ENCODE measurements at regions of chr7 and their contacts with region 1.

Region 1: GRCh38 chr7:149497456-149498261 is at the start of gene ZNF746:
- DNase-seq: peak; percentile 79 to 91
- ATAC-seq: peak; percentile 92 to 96 (median 93)
- H3K4me3 ChIP-seq: peak within 1 kb of the TSS; percentile 46
- H3K4me3 Mint-ChIP-seq: peak within 1 kb of the TSS; percentile 95
- H3K27ac ChIP-seq: peak within 1 kb of the TSS; percentile 24
- H3K27ac Mint-ChIP-seq: peak within 1 kb of the TSS; percentile 85 to 94
- H3K4me1 ChIP-seq: peaks cover 25% of the 10 kb centered on the region
- H3K4me1 Mint-ChIP-seq: peaks cover 36% of the 10 kb centered on the region in 2 donors
- H3K27me3 ChIP-seq: no peaks in the 10 kb centered on the region
- H3K27me3 Mint-ChIP-seq: peaks cover 0 to 2% of the 10 kb centered on the region in 2 donors
- CTCF ChIP-seq: peak; percentile 17
- total RNA-seq, gene ZNF746: 41.4 to 48.6 (median 47.3) TPM

Region 2: GRCh38 chr7:149239345-149240191 is 258.1 kb before region 1 on chr7 and contains the start of gene ZNF212:
- intact Hi-C with region 1: loop called (anchors 2 kb)
- DNase-seq: peak; percentile 82 to 92
- ATAC-seq: peak; percentile 99 to 100 (median 100)
- H3K4me3 ChIP-seq: peak within 1 kb of the TSS; percentile 91
- H3K4me3 Mint-ChIP-seq: peak within 1 kb of the TSS; percentile 93
- H3K27ac ChIP-seq: peak within 1 kb of the TSS; percentile 53
- H3K27ac Mint-ChIP-seq: peak within 1 kb of the TSS; percentile 79 to 91
- H3K4me1 ChIP-seq: peaks cover 18% of the 10 kb centered on the region
- H3K4me1 Mint-ChIP-seq: peaks cover 21 to 24% of the 10 kb centered on the region in 2 donors
- H3K27me3 ChIP-seq: peaks cover 2% of the 10 kb centered on the region
- H3K27me3 Mint-ChIP-seq: peaks cover 0 to 4% of the 10 kb centered on the region in 2 donors
- CTCF ChIP-seq: peak; percentile 77
- total RNA-seq, gene ZNF212: 11.2 to 23.7 (median 17.0) TPM

Region 3: DNA sequence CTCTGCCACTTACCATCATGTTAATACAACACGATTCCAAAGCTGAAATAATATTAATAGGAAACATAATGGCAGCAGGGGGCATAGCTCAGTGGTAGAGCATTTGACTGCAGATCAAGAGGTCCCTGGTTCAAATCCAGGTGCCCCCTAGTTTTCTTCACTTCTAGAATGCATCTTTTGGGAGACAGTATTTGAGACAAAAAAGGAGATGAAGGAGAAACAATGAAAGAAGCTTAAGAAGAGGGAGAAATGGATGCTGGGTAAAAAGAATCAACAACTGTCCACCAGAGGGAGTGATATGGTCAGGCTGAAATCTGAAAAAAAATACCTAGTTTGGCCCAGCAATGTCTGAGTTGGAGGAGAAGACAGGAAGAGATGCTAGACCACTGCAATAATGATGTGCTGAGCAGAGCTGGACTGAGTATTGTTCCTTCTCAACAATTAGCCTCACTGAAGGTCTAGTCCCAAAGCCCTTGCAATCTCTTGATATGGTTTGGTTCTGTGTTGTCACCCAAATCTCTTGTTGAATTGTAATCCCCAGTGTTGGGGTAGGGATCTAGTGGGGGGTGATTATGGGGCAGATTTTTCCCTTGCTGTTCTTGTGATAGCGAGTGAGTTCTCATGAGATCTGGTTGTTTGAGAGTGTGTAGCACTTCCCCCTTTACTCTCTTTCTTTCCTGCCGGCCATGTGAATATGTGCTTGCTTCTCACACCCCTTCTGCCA is 187.4 kb before region 1 on chr7:
- intact Hi-C with region 1: loop called (anchors 2 kb)
- DNase-seq: peak in 1 of 2 donors; percentile 54
- ATAC-seq: peak; percentile 40 to 69 (median 47)
- H3K4me3 ChIP-seq: no peak overlapping the region
- H3K4me3 Mint-ChIP-seq: no peak overlapping the region
- H3K27ac ChIP-seq: no peak overlapping the region
- H3K27ac Mint-ChIP-seq: no peak overlapping the region
- H3K4me1 ChIP-seq: no peaks in the 10 kb centered on the region
- H3K4me1 Mint-ChIP-seq: peaks cover 0 to 6% of the 10 kb centered on the region in 2 donors
- H3K27me3 ChIP-seq: no peaks in the 10 kb centered on the region
- H3K27me3 Mint-ChIP-seq: peaks cover 4 to 23% of the 10 kb centered on the region in 2 donors
- CTCF ChIP-seq: peak; percentile 25

Region 4: GRCh38 chr7:149422129-149422913 is 75.3 kb before region 1 on chr7:
- intact Hi-C with region 1: loop called (anchors 2 kb)
- DNase-seq: peak; percentile 72 to 92
- ATAC-seq: peak; percentile 98 to 99 (median 98)
- H3K4me3 ChIP-seq: peak overlapping the region; percentile 58
- H3K4me3 Mint-ChIP-seq: peak overlapping the region; percentile 80
- H3K27ac ChIP-seq: peak overlapping the region; percentile 70
- H3K27ac Mint-ChIP-seq: peak overlapping the region; percentile 69 to 75
- H3K4me1 ChIP-seq: peaks cover 15% of the 10 kb centered on the region
- H3K4me1 Mint-ChIP-seq: peaks cover 0 to 12% of the 10 kb centered on the region in 2 donors
- H3K27me3 ChIP-seq: no peaks in the 10 kb centered on the region
- H3K27me3 Mint-ChIP-seq: no peaks in the 10 kb centered on the region
- CTCF ChIP-seq: peak; percentile 53

Region 5: DNA sequence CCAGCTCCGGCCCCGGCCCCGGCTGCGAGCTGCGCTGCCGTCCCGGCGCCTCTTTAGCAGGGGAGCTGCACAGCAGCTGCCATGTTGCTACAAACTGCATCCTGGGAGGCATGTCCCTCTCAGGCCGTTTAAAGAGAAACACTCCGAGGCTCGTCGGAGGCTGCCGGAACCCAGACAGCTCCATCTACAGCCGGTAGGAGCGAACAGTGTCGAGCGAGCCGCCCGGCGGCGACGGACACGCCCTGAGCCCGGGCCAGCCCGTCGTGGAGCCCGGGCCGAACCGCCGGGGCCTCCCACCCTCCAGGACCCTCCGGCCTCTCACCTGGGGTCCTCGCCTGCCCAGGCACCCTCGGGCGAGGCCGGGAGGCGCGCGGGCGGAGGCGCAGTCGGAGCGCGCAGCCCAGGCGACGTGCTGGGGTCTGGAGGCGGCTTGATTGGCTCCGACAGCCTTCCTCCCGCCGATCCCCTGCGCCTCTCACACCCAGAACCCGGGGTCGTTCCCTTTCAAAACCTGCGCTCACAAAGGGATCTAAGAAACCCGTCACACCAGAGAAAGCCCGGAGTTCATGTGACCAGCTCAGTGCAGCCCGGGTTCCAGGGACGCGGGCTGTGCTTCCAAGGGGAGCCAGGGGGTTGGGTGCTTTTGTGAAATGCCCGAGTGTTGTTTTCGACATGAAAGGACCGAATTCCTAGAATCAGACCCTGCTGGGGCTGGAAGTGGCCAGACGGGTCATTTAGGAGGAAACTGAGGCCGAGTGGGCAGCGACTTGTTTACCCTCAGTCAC is 37.0 kb before region 1 on chr7 and contains the start of gene ZNF777:
- intact Hi-C with region 1: loop called (anchors 1 kb)
- DNase-seq: peak; percentile 72 to 90
- ATAC-seq: peak; percentile 97 to 98 (median 97)
- H3K4me3 ChIP-seq: peak within 1 kb of the TSS; percentile 55
- H3K4me3 Mint-ChIP-seq: peak within 1 kb of the TSS; percentile 84
- H3K27ac ChIP-seq: peak within 1 kb of the TSS; percentile 47
- H3K27ac Mint-ChIP-seq: peak within 1 kb of the TSS in 1 of 2 donors; percentile 44
- H3K4me1 ChIP-seq: peaks cover 15% of the 10 kb centered on the region
- H3K4me1 Mint-ChIP-seq: peaks cover 30 to 37% of the 10 kb centered on the region in 2 donors
- H3K27me3 ChIP-seq: peaks cover 4% of the 10 kb centered on the region
- H3K27me3 Mint-ChIP-seq: peaks cover 14 to 25% of the 10 kb centered on the region in 2 donors
- CTCF ChIP-seq: peak; percentile 56
- total RNA-seq, gene ZNF777: 14.6 to 18.2 (median 17.2) TPM

Region 6: DNA sequence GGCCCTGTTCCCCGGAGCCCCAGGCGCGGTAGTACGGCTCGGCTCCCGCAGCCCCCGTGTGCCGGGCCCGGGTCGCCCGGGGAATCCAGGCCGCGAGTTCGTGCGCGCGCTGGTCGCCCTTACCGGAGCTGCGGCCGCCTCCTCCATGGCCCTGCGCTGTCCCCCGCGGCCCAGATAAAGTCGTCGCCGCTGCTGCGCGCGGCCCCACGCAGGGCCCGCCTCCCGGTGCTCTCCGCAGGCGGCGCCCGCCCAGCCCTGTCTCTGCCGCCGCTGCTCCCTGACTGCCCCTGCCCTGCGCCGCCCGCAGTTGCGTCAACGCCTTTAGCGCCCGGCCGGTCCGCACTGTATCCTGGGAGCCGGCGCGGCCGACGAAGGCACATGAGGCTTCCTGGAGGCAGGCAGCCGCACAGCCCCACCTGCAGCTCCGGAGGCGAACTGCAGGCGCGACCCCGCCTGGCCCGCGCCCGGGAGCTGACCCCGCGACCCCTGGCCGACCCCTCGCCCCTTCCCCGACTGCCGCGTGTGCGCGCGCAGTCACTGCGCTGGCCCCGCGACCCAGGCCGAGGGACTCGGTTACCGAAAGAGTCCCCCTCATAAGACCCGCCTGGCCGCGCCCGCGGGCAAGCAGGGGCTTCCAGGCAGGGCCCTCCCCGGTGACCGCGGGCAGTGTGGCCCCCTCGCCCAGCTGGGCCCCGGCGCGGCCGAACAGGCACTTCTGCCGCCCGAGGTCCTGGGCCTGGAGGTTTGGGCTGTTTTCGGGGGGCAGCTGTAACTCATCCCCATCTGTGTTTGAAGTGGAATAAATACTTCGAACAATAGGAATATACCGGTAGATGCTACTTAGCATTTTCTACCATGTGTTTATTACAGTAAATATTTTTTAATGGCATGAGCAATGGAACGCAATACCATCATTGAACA is 127.0 kb after region 1 on chr7:
- intact Hi-C with region 1: loop called (anchors 2 kb)
- DNase-seq: peak; percentile 92 to 94
- ATAC-seq: peak; percentile 82 to 95 (median 90)
- H3K4me3 ChIP-seq: peak overlapping the region; percentile 68
- H3K4me3 Mint-ChIP-seq: peak overlapping the region; percentile 86
- H3K27ac ChIP-seq: peak overlapping the region; percentile 75
- H3K27ac Mint-ChIP-seq: peak overlapping the region; percentile 88 to 95
- H3K4me1 ChIP-seq: peaks cover 38% of the 10 kb centered on the region
- H3K4me1 Mint-ChIP-seq: peaks cover 41 to 45% of the 10 kb centered on the region in 2 donors
- H3K27me3 ChIP-seq: no peaks in the 10 kb centered on the region
- H3K27me3 Mint-ChIP-seq: peaks cover 8 to 11% of the 10 kb centered on the region in 2 donors
- CTCF ChIP-seq: peak; percentile 94